ENCODE measurements at regions of chr21 and their contacts with region 1.

Region 1: GRCh38 chr21:36504067-36505058 is 24.4 kb upstream of the CLDN14 start:
- DNase-seq: peak in 1 of 2 donors; percentile 84
- H3K4me3 ChIP-seq: no peak overlapping the region
- H3K27ac ChIP-seq: no peak overlapping the region
- H3K4me1 ChIP-seq: peaks cover 5 to 24% (median 15%) of the 10 kb centered on the region in 4 donors
- H3K27me3 ChIP-seq: no peaks in the 10 kb centered on the region
- CTCF ChIP-seq: peak in 5 of 7 experiments; percentile 73 to 96 (median 93)
- EP300 ChIP-seq: no peak
- POLR2A ChIP-seq: no peak

Region 2: GRCh38 chr21:36923270-36923669 is 418.9 kb after region 1 on chr21:
- intact Hi-C with region 1: loop called (anchors 5 kb)
- DNase-seq: no peak
- H3K4me3 ChIP-seq: no peak overlapping the region
- H3K27ac ChIP-seq: peak overlapping the region in 1 of 5 donors; percentile 7
- H3K4me1 ChIP-seq: peaks cover 1 to 21% (median 12%) of the 10 kb centered on the region in 4 donors
- H3K27me3 ChIP-seq: no peaks in the 10 kb centered on the region
- CTCF ChIP-seq: no peak
- EP300 ChIP-seq: no peak
- POLR2A ChIP-seq: no peak

Measured in stomach (tissue), 19 donors.